Ascending aorta (tissue), 2 donors: ENCODE measurements at regions of chr14 and their contacts with region 1.

Region 1: DNA sequence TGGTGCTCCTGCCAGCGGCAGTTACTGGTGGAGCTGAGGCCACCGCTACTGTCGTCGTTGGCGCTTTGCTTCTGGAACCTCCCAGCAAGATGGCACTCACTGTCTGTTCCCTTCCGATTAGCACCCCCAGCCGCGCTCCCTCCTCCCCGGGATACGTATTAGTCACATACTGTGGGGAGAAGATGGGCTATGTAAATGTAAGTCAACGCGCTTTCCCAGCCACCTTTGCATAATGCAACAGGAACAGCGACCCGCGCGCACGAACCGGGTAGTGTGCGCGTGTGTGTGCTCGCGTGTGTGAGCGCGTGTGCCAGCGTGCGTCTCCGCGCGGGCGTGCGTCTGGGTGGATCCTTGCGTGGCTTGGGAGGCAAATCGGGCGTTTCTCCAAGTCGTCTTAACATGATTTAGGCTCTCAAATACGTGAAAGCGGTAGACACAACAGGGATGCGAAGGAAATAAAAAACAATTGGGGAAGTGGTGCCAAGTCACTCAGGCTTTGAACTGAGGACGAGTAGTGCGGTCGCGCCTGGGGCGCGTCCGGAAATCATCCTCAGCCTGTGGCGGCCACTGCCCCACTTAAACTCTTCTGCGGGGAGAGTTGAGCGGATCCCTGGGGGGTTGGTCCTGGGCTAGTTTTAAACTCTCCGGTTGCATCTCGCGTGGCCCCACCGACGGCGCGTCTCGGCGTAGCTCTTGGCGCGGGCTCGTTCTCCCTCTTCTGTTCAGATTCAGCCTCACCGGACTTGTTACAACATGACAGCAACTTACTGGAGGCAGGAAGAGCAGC is 1.8 kb downstream of the FLRT2 start:
- DNase-seq: peak in 1 of 2 donors; percentile 77
- H3K4me3 ChIP-seq: peak overlapping the region; percentile 65 to 74
- H3K27ac ChIP-seq: peak overlapping the region; percentile 25 to 49
- H3K4me1 ChIP-seq: peaks cover 4 to 10% of the 10 kb centered on the region in 2 donors
- H3K27me3 ChIP-seq: no peaks in the 10 kb centered on the region
- CTCF ChIP-seq: peak in 2 of 3 experiments; percentile 25 to 28

Region 2: DNA sequence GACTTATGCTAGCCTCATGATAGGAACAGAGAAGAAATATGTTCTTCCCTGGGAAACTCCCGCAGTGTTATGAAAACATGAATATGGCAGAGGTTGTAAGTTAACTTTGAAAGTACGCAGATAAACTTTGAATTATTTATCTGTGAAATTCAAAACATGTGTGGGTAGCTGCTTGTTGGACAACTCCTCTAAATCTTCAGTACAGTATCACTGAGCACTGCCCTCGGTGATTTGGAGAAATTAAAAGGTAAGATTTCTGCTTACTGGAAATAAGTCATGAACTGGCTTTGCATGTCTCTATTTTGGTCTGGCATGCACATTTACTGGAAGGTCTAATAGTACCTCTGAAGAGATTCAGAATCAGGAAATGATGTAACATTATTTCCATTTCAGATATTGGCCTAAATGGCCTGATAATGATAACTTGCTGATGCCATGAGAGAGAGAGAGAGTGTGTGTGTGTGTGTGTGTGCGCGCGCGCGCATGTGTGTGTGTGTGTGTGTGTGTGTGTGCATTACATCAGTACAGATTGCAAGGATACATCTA is 1443.7 kb before region 1 on chr14:
- intact Hi-C with region 1: loop called (anchors 10 kb)
- DNase-seq: no peak
- H3K4me3 ChIP-seq: no peak overlapping the region
- H3K27ac ChIP-seq: no peak overlapping the region
- H3K4me1 ChIP-seq: no peaks in the 10 kb centered on the region
- H3K27me3 ChIP-seq: no peaks in the 10 kb centered on the region
- CTCF ChIP-seq: no peak

Region 3: GRCh38 chr14:85093631-85094330 is 438.0 kb before region 1 on chr14:
- intact Hi-C with region 1: loop called (anchors 5 kb)
- DNase-seq: no peak
- H3K4me3 ChIP-seq: no peak overlapping the region
- H3K27ac ChIP-seq: no peak overlapping the region
- H3K4me1 ChIP-seq: no peaks in the 10 kb centered on the region
- H3K27me3 ChIP-seq: no peaks in the 10 kb centered on the region
- CTCF ChIP-seq: no peak

Region 4: DNA sequence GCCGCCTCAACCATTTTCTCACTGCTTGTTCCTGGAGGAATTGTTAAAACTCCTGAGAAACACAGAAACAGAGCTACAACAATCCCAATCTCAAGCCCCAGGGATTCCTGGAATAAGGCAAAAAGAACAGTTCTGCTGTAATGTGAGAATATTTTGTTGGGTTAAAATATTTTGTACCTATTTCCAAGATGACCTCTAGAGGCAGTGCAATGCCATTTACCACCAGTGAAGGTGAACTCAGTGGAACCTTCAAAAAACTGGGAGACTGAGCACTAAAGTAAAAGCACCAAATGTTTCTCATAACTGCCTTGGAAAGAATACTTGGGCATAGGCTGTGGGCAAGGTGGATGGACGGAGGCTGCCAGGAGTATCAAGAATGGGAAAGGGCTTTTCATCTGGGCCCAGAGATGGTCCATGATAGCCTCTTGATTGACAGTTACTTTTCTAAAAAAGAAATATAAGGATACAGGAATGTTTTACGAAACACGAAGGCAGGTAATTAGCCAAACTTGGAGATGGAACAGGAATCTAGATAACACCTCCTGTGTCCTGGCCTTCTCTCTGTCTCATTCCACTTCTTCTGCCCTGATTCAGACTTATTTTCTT is 335.8 kb before region 1 on chr14:
- intact Hi-C with region 1: loop called (anchors 2 kb)
- DNase-seq: no peak
- H3K4me3 ChIP-seq: no peak overlapping the region
- H3K27ac ChIP-seq: no peak overlapping the region
- H3K4me1 ChIP-seq: no peaks in the 10 kb centered on the region
- H3K27me3 ChIP-seq: no peaks in the 10 kb centered on the region
- CTCF ChIP-seq: peak in 2 of 3 experiments; percentile 28 to 45

Region 5: DNA sequence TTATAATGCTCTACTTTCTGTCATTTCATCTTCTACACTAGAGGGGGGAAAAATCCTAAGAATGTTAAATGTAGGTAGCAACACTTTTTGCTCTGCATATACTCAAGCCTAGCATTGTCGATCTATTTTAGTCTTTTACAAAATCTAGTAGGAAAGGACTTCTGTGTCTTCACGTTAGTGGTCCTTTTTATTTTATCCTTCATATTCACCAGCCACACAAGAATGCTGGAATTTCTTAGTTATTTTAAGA is 254.9 kb before region 1 on chr14:
- intact Hi-C with region 1: loop called (anchors 5 kb)
- DNase-seq: no peak
- H3K4me3 ChIP-seq: no peak overlapping the region
- H3K27ac ChIP-seq: no peak overlapping the region
- H3K4me1 ChIP-seq: no peaks in the 10 kb centered on the region
- H3K27me3 ChIP-seq: no peaks in the 10 kb centered on the region
- CTCF ChIP-seq: no peak